Heart left ventricle (tissue), 16 donors: ENCODE measurements at regions of chr9 and their contacts with region 1.

Region 1: GRCh38 chr9:9002826-9003583 is 1203.4 kb upstream of the DMAC1 start:
- DNase-seq: peak in 4 of 5 donors; percentile 6 to 43 (median 24)
- ATAC-seq: peak; percentile 78 to 95 (median 83)
- H3K4me3 ChIP-seq: no peak overlapping the region
- H3K27ac ChIP-seq: no peak overlapping the region
- H3K4me1 ChIP-seq: peaks cover 0 to 4% (median 0%) of the 10 kb centered on the region in 12 donors
- H3K27me3 ChIP-seq: no peaks in the 10 kb centered on the region
- CTCF ChIP-seq: peak in 9 of 12 donors; percentile 25 to 53 (median 35)
- POLR2A ChIP-seq: no peak

Region 2: GRCh38 chr9:8627976-8628679 is 374.9 kb before region 1 on chr9:
- intact Hi-C with region 1: loop called in 1 of 10 experiments (anchors 5 kb)
- DNase-seq: no peak
- ATAC-seq: peak in 1 of 4 donors; percentile 38
- H3K4me3 ChIP-seq: no peak overlapping the region
- H3K27ac ChIP-seq: no peak overlapping the region
- H3K4me1 ChIP-seq: peaks cover 0 to 6% (median 0%) of the 10 kb centered on the region in 12 donors
- H3K27me3 ChIP-seq: no peaks in the 10 kb centered on the region
- CTCF ChIP-seq: no peak
- POLR2A ChIP-seq: no peak

Region 3: DNA sequence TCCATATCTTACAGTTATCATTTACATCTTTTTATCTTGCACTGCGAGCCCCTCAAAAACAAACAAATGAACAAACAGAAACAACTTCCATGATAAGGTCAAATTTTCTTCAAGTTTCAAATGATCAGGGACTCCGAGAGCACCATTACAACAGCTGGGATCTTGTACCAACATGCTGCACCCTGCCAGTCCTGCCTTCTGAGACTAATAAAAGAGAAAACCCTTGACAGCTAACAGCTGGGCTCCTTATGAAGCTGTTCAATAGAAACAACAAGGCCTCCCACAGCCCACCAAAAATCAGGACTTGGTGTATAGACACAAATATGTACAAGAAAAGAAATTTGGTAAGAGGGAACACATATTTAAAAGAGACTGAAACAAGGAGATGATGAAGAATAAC is 218.2 kb before region 1 on chr9:
- intact Hi-C with region 1: no loop called
- DNase-seq: peak in 1 of 5 donors; percentile 25
- ATAC-seq: no peak
- H3K4me3 ChIP-seq: peak overlapping the region in 3 of 12 donors; percentile 1 to 33 (median 27)
- H3K27ac ChIP-seq: peak overlapping the region in 2 of 12 donors; percentile 49 to 54
- H3K4me1 ChIP-seq: peaks cover 0 to 4% (median 0%) of the 10 kb centered on the region in 12 donors
- H3K27me3 ChIP-seq: no peaks in the 10 kb centered on the region
- CTCF ChIP-seq: no peak
- POLR2A ChIP-seq: no peak

Region 4: DNA sequence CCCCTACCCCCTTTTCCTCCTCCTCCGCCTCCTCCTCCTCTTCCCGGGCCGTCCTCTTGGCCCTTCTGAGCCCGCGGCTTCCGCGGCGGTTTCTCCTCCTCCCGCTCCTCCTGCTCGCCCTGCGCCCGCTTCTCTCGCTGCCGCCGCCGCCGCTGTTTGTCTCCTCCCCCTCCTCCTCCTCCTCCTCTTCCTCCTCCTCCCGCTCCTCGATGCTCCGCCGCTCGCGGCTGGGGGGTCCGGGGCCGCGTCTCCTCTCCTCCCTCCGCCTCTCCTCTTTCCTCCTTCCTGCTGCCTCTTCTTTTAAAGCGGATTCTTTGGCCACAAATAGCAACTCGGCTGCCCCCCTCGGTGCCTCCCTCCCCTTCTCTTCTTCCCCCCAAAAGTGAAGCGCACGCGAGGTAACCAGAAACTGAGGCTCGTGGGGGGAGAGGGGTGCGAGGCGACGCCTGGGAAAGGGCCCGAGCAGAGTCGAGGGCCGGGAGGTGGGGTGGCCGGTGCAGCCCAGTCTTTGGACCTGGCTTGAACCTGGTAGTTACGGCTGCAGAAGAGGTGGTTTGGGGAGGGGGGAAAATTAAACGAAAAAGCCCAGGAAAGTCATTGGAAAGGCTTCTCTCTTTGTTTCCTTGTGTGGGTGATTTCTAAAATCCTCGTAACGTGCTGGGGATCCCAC is 144.9 kb before region 1 on chr9:
- intact Hi-C with region 1: loop called in 1 of 10 experiments (anchors 5 kb)
- DNase-seq: peak; percentile 59 to 83 (median 73)
- ATAC-seq: peak; percentile 30 to 86 (median 83)
- H3K4me3 ChIP-seq: peak overlapping the region; percentile 59 to 89 (median 66)
- H3K27ac ChIP-seq: peak overlapping the region in 6 of 12 donors; percentile 44 to 63 (median 54)
- H3K4me1 ChIP-seq: peaks cover 0 to 19% (median 3%) of the 10 kb centered on the region in 12 donors
- H3K27me3 ChIP-seq: peaks cover 0 to 40% (median 0%) of the 10 kb centered on the region in 9 donors
- CTCF ChIP-seq: no peak
- POLR2A ChIP-seq: no peak

Region 5: GRCh38 chr9:8895861-8896224 is 107.2 kb before region 1 on chr9:
- intact Hi-C with region 1: loop called in 5 of 10 experiments (anchors 5 to 10 kb)
- DNase-seq: no peak
- ATAC-seq: peak; percentile 37 to 86 (median 72)
- H3K4me3 ChIP-seq: peak overlapping the region in 3 of 12 donors; percentile 4 to 38 (median 23)
- H3K27ac ChIP-seq: no peak overlapping the region
- H3K4me1 ChIP-seq: peaks cover 0 to 10% (median 0%) of the 10 kb centered on the region in 12 donors
- H3K27me3 ChIP-seq: no peaks in the 10 kb centered on the region
- CTCF ChIP-seq: peak; percentile 37 to 72 (median 60)
- POLR2A ChIP-seq: no peak

Region 6: GRCh38 chr9:8907863-8908262 is 95.1 kb before region 1 on chr9:
- intact Hi-C with region 1: loop called in 1 of 10 experiments (anchors 10 kb)
- DNase-seq: no peak
- ATAC-seq: no peak
- H3K4me3 ChIP-seq: no peak overlapping the region
- H3K27ac ChIP-seq: no peak overlapping the region
- H3K4me1 ChIP-seq: no peaks in the 10 kb centered on the region
- H3K27me3 ChIP-seq: no peaks in the 10 kb centered on the region
- CTCF ChIP-seq: no peak
- POLR2A ChIP-seq: no peak